IMR-90 (cell line): ENCODE measurements at regions of chr5 and their contacts with region 1.

Region 1: GRCh38 chr5:57950616-57951228 is 468.1 kb upstream of the ACTBL2 start:
- DNase-seq: peak; percentile 20
- ATAC-seq: no peak
- H3K4me3 ChIP-seq: no peak overlapping the region
- H3K27ac ChIP-seq: no peak overlapping the region
- H3K4me1 ChIP-seq: no peaks in the 10 kb centered on the region
- H3K27me3 ChIP-seq: no peaks in the 10 kb centered on the region
- CTCF ChIP-seq: no peak
- POLR2A ChIP-seq: no peak
- RAD21 ChIP-seq: no peak

Region 2: GRCh38 chr5:56517011-56517416 is 1433.7 kb before region 1 on chr5:
- CTCF ChIA-PET with region 1: no interaction called
- POLR2A ChIA-PET with region 1: no interaction called
- dilution Hi-C with region 1: no loop called
- in situ Hi-C with region 1: no loop called
- intact Hi-C with region 1: no loop called
- DNase-seq: peak; percentile 29
- ATAC-seq: no peak
- H3K4me3 ChIP-seq: no peak overlapping the region
- H3K27ac ChIP-seq: no peak overlapping the region
- H3K4me1 ChIP-seq: peaks cover 4% of the 10 kb centered on the region; the same call in 1 of the 2 replicates
- H3K27me3 ChIP-seq: peaks cover 11% of the 10 kb centered on the region
- CTCF ChIP-seq: no peak
- POLR2A ChIP-seq: no peak
- RAD21 ChIP-seq: no peak

Region 3: DNA sequence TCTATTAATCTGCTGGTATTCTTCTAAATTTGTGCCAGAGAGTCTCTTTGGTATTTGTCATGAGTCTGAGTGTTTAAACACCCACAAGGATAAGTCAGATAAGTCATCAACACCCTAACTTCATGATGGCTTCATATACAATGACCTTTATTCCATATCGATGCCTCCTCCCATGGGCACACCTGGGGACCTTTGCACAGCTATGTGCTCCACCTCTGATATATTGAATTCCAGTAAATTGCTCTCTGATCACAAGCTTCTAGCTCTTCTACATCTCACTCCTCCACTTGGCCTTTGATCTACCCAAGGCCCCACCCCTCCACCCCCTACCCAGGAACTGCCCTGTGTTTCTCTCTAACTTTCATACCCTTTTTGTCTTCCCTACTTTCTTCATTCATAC is 896.1 kb before region 1 on chr5:
- CTCF ChIA-PET with region 1: no interaction called
- POLR2A ChIA-PET with region 1: no interaction called
- dilution Hi-C with region 1: no loop called
- in situ Hi-C with region 1: no loop called
- intact Hi-C with region 1: loop called (anchors 5 kb)
- DNase-seq: no peak
- ATAC-seq: no peak
- H3K4me3 ChIP-seq: no peak overlapping the region
- H3K27ac ChIP-seq: no peak overlapping the region
- H3K4me1 ChIP-seq: no peaks in the 10 kb centered on the region
- H3K27me3 ChIP-seq: peaks cover 9% of the 10 kb centered on the region
- CTCF ChIP-seq: no peak
- POLR2A ChIP-seq: no peak
- RAD21 ChIP-seq: no peak

Region 4: DNA sequence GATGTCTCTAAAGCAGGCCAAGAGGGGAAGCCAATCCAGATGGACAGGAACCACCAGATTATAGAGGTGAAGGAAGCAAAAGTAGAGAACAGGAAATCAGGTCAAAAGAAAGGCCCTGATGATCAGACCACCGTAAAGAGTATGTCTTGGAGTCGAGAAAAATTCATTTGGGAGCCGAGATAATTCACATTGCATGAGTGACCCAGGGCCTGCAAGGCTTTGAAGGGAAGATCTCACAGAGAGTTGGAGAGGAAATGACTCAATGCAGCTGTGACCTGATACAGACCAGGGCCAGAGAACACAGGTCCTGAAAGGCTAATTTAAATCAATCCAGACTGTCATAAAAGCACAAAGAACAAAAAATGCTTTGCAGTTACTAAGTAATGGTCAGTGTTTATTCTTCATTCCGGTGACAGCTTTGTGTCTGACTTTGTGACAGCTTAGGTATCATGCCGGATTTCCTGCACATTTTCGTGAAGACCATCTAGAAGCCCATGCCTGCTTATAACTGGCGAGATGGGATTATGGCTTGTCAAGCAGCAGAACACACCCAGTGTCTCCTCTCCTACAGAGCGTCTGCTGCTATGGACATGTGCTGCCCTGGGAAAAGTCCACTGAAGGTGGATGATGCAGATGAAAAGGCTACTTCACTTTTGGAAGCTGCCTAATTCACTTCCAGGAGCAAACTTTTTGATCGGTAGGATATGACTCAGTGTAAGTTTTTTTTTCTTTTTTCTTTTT is 462.3 kb before region 1 on chr5:
- CTCF ChIA-PET with region 1: no interaction called
- POLR2A ChIA-PET with region 1: no interaction called
- dilution Hi-C with region 1: no loop called
- in situ Hi-C with region 1: no loop called
- intact Hi-C with region 1: no loop called
- DNase-seq: peak; percentile 86
- ATAC-seq: peak; percentile 93
- H3K4me3 ChIP-seq: no peak overlapping the region
- H3K27ac ChIP-seq: peak overlapping the region; percentile 71
- H3K4me1 ChIP-seq: peaks cover 15% of the 10 kb centered on the region
- H3K27me3 ChIP-seq: no peaks in the 10 kb centered on the region
- CTCF ChIP-seq: no peak
- POLR2A ChIP-seq: no peak
- RAD21 ChIP-seq: 0 out of 2 replicates have a peak, but pooled peaks have one; percentile 8

Region 5: DNA sequence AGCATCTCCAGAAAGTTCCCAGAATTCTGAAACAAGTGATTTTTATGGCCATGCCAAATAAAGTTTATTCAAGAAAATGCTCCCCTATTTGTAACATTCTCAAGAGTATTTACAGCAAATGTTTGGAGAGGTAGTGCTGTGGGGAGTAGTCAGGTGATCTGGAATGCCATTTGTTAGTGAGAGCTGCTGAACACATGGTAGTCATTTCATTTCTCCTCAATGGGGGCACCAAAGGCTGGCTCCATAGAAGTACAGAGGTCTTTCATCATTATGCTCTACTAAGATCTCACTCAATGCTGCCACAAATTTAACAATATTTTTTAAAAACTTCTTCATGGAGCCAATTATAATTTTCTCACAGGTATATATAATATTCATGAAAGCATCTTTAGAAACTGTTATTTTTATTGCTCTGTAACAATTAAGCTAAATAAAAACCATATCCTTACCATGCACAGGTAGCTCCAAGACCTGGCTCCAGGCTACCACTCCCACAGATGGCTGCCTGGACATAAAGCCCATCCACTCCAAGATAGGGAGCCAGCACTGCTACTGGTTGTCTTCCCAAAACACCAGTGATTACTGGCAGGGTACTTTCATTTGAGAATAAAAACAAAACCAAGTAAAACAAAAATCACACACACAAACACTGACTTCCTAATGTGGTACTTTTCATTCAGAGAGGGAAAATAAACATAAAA is 308.4 kb after region 1 on chr5:
- CTCF ChIA-PET with region 1: no interaction called
- POLR2A ChIA-PET with region 1: no interaction called
- dilution Hi-C with region 1: no loop called
- in situ Hi-C with region 1: no loop called
- intact Hi-C with region 1: no loop called
- DNase-seq: no peak
- ATAC-seq: peak; percentile 15; the same call in 1 of the 2 replicates
- H3K4me3 ChIP-seq: no peak overlapping the region
- H3K27ac ChIP-seq: peak overlapping the region; percentile 31; the same call in 1 of the 2 replicates
- H3K4me1 ChIP-seq: peaks cover 4% of the 10 kb centered on the region
- H3K27me3 ChIP-seq: no peaks in the 10 kb centered on the region
- CTCF ChIP-seq: no peak
- POLR2A ChIP-seq: no peak
- RAD21 ChIP-seq: no peak

Region 6: GRCh38 chr5:59276920-59277372 is 1326.2 kb after region 1 on chr5:
- CTCF ChIA-PET with region 1: no interaction called
- POLR2A ChIA-PET with region 1: no interaction called
- dilution Hi-C with region 1: no loop called
- in situ Hi-C with region 1: no loop called
- intact Hi-C with region 1: no loop called
- DNase-seq: no peak
- ATAC-seq: no peak
- H3K4me3 ChIP-seq: no peak overlapping the region
- H3K27ac ChIP-seq: no peak overlapping the region
- H3K4me1 ChIP-seq: no peaks in the 10 kb centered on the region
- H3K27me3 ChIP-seq: no peaks in the 10 kb centered on the region; the same call in 1 of the 2 replicates
- CTCF ChIP-seq: no peak
- POLR2A ChIP-seq: no peak
- RAD21 ChIP-seq: no peak